ENCODE measurements at regions of chr16 and their contacts with region 1.

Region 1: GRCh38 chr16:57648590-57649442 is 19.3 kb upstream of the ADGRG3 start:
- DNase-seq: no peak
- H3K4me3 ChIP-seq: no peak overlapping the region
- H3K27me3 ChIP-seq: no peaks in the 10 kb centered on the region
- CTCF ChIP-seq: peak; percentile 100

Region 2: GRCh38 chr16:57591086-57591869 is 57.5 kb before region 1 on chr16:
- CTCF ChIA-PET with region 1: interaction called, 81 read pairs
- POLR2A ChIA-PET with region 1: no interaction called
- DNase-seq: peak; percentile 17
- H3K4me3 ChIP-seq: no peak overlapping the region
- H3K27me3 ChIP-seq: peaks cover 5% of the 10 kb centered on the region
- CTCF ChIP-seq: peak; percentile 91

Region 3: GRCh38 chr16:57600048-57600835 is 48.6 kb before region 1 on chr16:
- CTCF ChIA-PET with region 1: interaction called, 81 read pairs
- POLR2A ChIA-PET with region 1: no interaction called
- DNase-seq: no peak
- H3K4me3 ChIP-seq: no peak overlapping the region
- H3K27me3 ChIP-seq: peaks cover 7% of the 10 kb centered on the region
- CTCF ChIP-seq: peak; percentile 76

Region 4: GRCh38 chr16:57609541-57610401 is 39.0 kb before region 1 on chr16:
- CTCF ChIA-PET with region 1: interaction called, 29 read pairs
- POLR2A ChIA-PET with region 1: no interaction called
- DNase-seq: no peak
- H3K4me3 ChIP-seq: no peak overlapping the region
- H3K27me3 ChIP-seq: peaks cover 9% of the 10 kb centered on the region
- CTCF ChIP-seq: no peak

Region 5: DNA sequence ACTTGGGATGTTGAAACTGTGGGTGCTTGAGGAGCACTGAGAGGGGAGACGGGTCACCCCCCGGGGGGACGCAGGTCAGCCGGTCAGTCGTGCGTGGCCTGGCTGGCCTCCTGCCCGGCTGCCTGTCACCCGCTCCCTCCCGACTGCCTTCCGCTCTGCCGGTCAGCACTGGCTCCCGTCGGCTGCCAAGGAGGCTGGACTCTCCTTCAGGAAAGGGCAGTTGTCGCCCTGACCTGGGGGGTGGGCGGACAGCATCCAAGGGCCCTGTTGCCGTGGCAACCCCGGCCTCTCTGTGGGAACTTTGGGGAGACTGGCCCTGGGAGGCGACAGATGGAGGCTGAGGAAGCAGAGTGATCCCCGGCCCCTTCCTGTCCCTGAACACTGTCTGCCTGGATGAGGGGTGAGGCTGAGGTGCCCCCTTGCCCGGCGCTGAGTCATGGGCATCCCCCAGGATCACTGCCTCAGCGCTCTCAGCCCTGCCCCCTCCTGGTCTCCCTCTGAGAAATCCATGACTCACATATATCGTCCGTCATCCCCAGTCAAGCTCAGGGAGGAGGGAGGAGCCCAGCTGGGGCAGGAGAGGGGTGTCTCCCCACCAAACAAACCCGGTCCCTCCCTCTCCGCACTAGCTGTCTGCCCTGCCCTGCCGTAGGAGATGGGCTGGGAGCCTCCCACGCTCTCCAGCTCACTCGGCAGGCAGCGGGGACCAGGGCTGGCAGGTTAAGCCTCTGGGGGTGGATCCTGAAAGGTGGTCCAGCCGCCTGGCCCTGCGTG is 20.6 kb before region 1 on chr16 and contains the start of gene ADGRG1:
- CTCF ChIA-PET with region 1: interaction called, 63 read pairs
- POLR2A ChIA-PET with region 1: no interaction called
- DNase-seq: peak; percentile 79
- H3K4me3 ChIP-seq: peak within 1 kb of the TSS; percentile 2; the same call in 1 of the 2 replicates
- H3K27me3 ChIP-seq: no peaks in the 10 kb centered on the region
- CTCF ChIP-seq: peak; percentile 18; the same call in 1 of the 2 replicates
- polyA plus RNA-seq, gene ADGRG1: 0.44 and 1.1 TPM in 2 replicates

Region 6: GRCh38 chr16:57637424-57637823 is 11.4 kb before region 1 on chr16:
- CTCF ChIA-PET with region 1: interaction called, 63 read pairs
- POLR2A ChIA-PET with region 1: no interaction called
- DNase-seq: no peak
- H3K4me3 ChIP-seq: no peak overlapping the region
- H3K27me3 ChIP-seq: peaks cover 5% of the 10 kb centered on the region
- CTCF ChIP-seq: no peak

Measured in BJ (cell line).